ENCODE measurements at regions of chrX and their contacts with region 1.

Region 1: DNA sequence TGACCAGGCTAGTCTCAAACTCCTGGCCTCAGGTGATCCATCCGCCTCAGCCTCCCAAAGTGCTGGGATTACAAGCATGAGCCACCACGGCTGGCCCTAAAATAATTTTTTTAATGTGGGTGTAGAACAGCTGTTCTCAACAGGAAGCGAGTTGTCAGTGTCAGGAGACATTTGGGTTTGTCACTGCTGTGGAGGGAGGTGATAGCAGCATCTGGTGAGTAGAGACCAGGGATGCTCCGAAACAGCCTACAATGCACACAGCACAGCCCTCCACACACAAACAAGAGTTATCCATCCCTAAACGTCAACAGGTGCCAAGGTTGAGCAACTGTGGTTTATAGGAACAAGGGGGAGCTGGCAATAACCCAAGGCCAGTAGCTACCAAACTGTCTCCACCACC is 243.4 kb upstream of the STS start:
- DNase-seq: no peak
- H3K4me3 Mint-ChIP-seq: no peak overlapping the region
- H3K27ac Mint-ChIP-seq: no peak overlapping the region
- H3K4me1 Mint-ChIP-seq: no peaks in the 10 kb centered on the region
- H3K27me3 Mint-ChIP-seq: no peaks in the 10 kb centered on the region
- CTCF ChIP-seq: no peak

Region 2: DNA sequence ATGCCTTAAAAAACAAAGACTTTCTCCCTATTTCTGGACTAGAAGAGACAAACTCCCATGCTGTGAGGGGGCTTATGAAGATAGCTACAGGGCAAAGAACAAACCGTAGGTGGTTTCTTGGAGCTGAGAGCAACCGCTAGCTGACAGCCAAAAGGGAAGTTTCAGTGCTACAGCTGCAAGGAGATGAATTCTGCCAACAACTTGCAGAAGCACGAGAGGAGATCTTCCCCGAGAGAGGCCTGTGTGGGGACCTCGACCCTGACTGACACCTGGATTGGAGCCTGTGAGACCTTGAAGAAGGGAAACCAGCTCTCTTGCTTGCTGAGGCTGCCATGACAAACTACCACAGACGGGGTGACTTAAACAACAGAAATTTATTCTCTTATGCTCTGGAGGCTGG is 185.4 kb before region 1 on chrX:
- CTCF ChIA-PET with region 1: no interaction called
- POLR2A ChIA-PET with region 1: no interaction called
- intact Hi-C with region 1: no loop called
- DNase-seq: no peak
- H3K4me3 Mint-ChIP-seq: no peak overlapping the region
- H3K27ac Mint-ChIP-seq: no peak overlapping the region
- H3K4me1 Mint-ChIP-seq: no peaks in the 10 kb centered on the region
- H3K27me3 Mint-ChIP-seq: no peaks in the 10 kb centered on the region
- CTCF ChIP-seq: no peak

Region 3: GRCh38 chrX:6968231-6968630 is 64.1 kb after region 1 on chrX:
- CTCF ChIA-PET with region 1: no interaction called
- POLR2A ChIA-PET with region 1: no interaction called
- intact Hi-C with region 1: loop called (anchors 5 kb)
- DNase-seq: no peak
- H3K4me3 Mint-ChIP-seq: no peak overlapping the region
- H3K27ac Mint-ChIP-seq: no peak overlapping the region
- H3K4me1 Mint-ChIP-seq: no peaks in the 10 kb centered on the region
- H3K27me3 Mint-ChIP-seq: no peaks in the 10 kb centered on the region
- CTCF ChIP-seq: no peak

Measured in MCF 10A (cell line).